Activated B cell treated with CpG ODN at 0.5 μM for 24 hours (primary cell): ENCODE measurements at regions of chr7 and their contacts with region 1.

Region 1: DNA sequence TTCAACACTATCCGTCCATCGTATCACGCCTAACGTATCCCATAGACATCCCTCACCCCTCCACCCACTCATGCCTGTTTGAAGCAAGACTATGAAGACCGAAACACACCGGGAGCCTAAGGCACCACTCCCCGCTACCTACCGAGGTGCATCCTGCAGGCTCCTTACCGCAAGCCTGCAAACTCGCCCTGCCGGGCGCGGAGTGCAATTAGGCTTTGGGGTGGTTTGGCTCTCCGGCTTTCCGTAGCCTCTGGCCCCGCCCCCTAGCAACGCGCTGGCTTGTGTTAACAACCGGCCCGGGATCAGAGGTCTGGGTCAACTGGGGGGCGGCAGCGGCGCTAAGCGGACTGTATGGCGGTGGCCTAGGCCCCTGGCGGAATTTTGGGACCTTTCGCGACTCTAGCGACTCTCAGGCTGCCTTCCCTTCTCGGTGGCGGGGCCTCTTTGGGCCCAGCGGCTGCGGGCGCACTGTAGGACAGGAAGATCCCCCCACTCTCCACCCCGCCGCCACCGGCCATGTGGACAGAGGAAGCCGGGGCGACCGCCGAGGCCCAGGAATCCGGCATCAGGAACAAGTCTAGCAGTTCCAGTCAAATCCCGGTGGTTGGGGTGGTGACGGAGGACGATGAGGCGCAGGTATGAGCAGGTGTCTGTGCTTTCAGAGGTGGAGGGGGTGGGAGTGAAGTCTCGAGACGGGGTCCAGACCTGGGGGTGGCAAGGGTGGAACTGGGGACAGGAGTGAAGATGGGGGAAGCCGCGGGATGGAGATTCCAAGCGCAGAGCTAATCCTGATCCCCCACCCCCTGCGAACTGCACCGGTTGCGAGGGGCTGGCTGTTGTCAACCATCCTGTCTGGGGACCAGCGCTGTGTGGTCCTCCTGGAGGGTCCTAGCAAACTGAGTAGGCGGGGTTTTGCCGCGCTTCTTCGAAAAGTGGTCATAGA is at the start of gene CFAP69:
- DNase-seq: peak; percentile 82
- ATAC-seq: peak; percentile 89
- H3K4me3 Mint-ChIP-seq: peak within 1 kb of the TSS; percentile 87
- H3K27ac Mint-ChIP-seq: peak within 1 kb of the TSS; percentile 3
- H3K4me1 Mint-ChIP-seq: peaks cover 29% of the 10 kb centered on the region
- H3K27me3 Mint-ChIP-seq: peaks cover 37% of the 10 kb centered on the region
- CTCF ChIP-seq: no peak
- total RNA-seq, gene CFAP69: 0.62 TPM in 1 of 2 replicates, not detected in the other

Region 2: DNA sequence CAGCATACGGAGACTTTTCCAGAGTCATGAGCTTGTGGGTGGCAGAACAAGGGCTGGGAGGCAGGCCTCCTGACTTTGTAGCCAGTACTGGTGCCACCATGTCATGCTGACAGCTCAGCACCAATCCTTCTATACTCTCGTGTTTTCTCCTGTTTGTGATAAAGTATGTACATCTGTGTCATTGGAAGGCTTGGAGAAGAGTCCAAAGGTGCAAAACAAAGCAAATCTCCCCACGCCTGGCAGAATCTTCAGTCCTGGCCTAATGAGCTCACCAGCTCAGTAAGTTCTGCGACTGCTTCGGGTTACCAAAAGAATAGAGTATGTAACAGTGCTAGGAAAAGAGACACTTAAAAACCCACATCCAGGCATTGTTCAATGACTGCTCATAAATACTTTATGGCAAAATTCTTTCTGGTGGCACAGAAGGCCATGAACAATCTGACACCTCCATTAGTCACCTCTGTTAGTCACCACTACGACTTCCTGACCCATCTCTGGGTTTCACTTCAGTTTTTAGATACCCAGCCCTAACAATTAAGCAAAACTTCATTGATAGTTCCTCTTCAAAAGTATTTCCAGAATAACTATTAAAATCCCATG is 66.4 kb before region 1 on chr7:
- CTCF ChIA-PET with region 1: no interaction called
- POLR2A ChIA-PET with region 1: no interaction called
- intact Hi-C with region 1: loop called (anchors 2 kb)
- DNase-seq: no peak
- ATAC-seq: peak; percentile 89
- H3K4me3 Mint-ChIP-seq: peak overlapping the region; percentile 56
- H3K27ac Mint-ChIP-seq: peak overlapping the region; percentile 81
- H3K4me1 Mint-ChIP-seq: peaks cover 23% of the 10 kb centered on the region
- H3K27me3 Mint-ChIP-seq: no peaks in the 10 kb centered on the region
- CTCF ChIP-seq: no peak

Region 3: DNA sequence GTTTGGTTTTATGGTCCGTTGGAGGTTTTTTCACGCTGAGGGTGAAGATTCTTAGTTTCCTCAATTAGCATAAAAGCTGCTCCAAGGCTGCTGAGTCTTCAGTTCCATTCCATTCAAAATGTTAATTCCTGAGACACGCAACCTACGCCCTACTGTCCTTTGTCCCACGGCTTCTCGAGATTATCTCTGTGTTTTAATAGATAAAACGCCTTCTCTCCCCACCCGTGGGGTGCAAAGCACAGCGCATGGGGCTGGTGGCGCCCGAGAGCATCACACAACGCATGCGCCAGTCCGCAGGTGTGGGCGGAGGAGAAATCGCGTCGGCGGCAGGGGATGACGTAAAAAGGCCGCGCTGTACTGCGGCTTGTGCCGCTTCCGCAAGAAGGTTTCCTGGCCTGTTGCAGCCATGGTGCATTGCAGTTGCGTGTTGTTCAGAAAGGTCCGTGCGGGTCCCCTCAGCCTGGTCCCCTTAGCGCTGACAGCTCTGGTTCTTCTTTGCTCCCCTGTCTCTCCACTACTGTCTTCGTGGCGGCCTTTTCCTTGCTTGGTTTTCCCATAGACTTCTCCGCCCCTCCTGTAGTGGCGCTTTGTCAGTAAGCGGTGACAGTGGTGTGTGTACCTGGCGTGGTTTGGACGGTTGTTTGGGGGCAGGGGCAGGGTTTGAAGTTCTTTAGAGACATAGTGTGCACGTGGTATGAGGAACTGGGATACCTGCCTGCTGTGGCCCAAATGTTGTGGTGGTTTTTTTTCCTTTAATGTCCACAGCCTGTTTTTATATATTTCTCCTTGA is 101.4 kb after region 1 on chr7 and contains the start of gene GTPBP10:
- CTCF ChIA-PET with region 1: no interaction called
- POLR2A ChIA-PET with region 1: no interaction called
- intact Hi-C with region 1: loop called (anchors 1 kb)
- DNase-seq: peak; percentile 90
- ATAC-seq: peak; percentile 97
- H3K4me3 Mint-ChIP-seq: peak within 1 kb of the TSS; percentile 96
- H3K27ac Mint-ChIP-seq: peak within 1 kb of the TSS; percentile 98
- H3K4me1 Mint-ChIP-seq: peaks cover 35% of the 10 kb centered on the region
- H3K27me3 Mint-ChIP-seq: no peaks in the 10 kb centered on the region
- CTCF ChIP-seq: peak; percentile 37
- total RNA-seq, gene GTPBP10: 28.8 and 29.5 TPM in 2 replicates

Region 4: DNA sequence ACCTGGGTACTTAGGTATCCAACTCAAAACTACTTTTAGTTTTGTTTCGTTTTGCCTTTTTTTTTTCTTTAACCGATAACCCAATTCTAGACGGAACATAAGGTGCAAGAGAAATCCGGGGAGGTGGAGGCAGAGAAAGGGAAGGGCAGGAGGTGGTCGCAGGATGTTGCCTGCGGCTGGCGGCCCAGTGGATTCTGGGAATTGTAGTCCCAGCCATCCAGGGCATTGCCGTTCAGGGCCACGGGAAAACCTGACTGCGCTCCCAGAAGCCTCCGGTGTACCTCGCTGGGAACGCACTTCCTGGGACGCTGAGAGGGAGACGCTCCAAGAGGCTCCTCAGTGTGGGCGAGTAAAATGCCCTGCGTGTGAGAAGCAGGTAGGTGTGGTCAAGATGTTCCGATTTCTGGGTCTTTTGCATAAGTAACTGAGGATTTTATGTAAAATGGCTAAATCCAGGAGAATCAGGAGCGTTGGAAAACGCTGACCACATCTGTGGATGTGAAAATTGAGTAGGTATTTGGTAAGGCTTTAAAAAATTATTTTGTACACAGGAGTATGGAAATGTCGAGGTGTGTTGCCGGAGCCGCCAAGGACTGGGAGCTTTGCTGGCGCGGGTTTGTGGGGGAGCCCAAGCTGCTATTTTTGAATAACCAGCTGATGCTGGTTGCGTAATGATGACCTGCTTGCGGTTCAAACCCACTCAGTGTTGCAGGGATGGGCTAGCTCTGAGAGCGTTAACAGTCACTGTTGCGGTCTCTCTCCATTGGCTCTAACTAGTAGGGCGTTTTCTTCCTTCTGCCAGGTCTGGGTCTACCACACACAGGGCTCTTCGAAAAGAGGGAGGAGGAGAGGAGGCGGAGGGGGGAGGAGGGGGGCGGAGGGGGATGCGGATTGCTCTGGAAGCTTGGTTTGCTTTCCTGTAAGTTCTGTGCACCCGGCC is 158.3 kb after region 1 on chr7 and contains the start of gene CLDN12:
- CTCF ChIA-PET with region 1: no interaction called
- POLR2A ChIA-PET with region 1: no interaction called
- intact Hi-C with region 1: loop called (anchors 1 kb)
- DNase-seq: peak; percentile 57
- ATAC-seq: peak; percentile 94
- H3K4me3 Mint-ChIP-seq: peak within 1 kb of the TSS; percentile 97
- H3K27ac Mint-ChIP-seq: peak within 1 kb of the TSS; percentile 89
- H3K4me1 Mint-ChIP-seq: peaks cover 15% of the 10 kb centered on the region
- H3K27me3 Mint-ChIP-seq: no peaks in the 10 kb centered on the region
- CTCF ChIP-seq: no peak
- total RNA-seq, gene CLDN12: 6.2 and 9.0 TPM in 2 replicates

Region 5: DNA sequence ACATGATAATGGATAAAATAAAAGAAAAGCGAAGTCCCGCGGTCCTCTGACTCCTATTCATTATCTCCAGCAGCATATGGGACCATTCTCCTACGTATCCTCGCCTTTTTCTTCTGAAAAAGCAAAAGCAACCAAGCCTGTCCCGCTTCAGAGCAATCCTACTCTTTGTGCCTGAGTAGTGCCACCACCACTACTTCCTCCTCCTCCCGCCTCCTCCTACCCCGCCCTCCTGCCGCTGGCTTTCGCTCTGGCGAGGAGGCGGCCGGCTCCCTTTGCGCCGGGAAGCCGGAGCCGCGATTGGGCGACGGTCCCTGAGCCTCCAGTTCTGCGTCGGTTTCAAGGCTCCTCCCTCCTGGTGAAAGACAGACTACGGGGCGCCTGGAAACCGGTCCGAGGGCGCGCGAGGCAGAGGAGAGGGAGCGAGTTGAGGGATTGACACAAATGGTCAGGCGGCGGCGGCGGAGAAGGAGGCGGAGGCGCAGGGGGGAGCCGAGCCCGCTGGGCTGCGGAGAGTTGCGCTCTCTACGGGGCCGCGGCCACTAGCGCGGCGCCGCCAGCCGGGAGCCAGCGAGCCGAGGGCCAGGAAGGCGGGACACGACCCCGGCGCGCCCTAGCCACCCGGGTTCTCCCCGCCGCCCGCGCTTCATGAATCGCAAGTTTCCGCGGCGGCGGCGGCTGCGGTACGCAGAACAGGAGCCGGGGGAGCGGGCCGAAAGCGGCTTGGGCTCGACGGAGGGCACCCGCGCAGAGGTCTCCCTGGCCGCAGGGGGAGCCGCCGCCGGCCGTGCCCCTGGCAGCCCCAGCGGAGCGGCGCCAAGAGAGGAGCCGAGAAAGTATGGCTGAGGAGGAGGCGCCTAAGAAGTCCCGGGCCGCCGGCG is 1019.1 kb after region 1 on chr7 and contains the start of gene FZD1:
- CTCF ChIA-PET with region 1: no interaction called
- POLR2A ChIA-PET with region 1: no interaction called
- intact Hi-C with region 1: loop called (anchors 10 kb)
- DNase-seq: peak; percentile 54
- ATAC-seq: peak; percentile 86
- H3K4me3 Mint-ChIP-seq: peak within 1 kb of the TSS; percentile 90
- H3K27ac Mint-ChIP-seq: peak within 1 kb of the TSS; percentile 65
- H3K4me1 Mint-ChIP-seq: peaks cover 21% of the 10 kb centered on the region
- H3K27me3 Mint-ChIP-seq: peaks cover 36% of the 10 kb centered on the region
- CTCF ChIP-seq: no peak
- total RNA-seq, gene FZD1: 0.42 and 0.55 TPM in 2 replicates

Region 6: DNA sequence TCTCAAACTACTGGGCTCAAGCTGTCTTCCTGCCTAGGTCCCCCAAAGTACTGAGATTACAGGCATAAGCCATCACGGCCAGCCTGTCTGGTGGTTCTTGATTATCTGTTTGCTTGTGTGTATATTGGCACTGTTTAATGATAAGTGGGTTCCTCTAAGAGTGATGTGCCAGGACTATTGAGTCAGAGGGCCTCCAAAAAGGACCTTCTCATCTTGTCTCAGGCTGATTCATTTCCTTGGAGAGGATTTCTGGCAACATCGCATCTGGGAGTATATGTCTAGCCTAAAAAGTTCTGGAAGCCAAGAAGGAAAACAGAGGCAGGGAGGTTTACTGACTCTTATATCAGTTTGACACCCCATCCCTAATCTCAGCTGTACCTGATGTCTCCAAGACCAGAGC is 1668.4 kb after region 1 on chr7:
- CTCF ChIA-PET with region 1: no interaction called
- POLR2A ChIA-PET with region 1: no interaction called
- intact Hi-C with region 1: no loop called
- DNase-seq: no peak
- ATAC-seq: no peak
- H3K4me3 Mint-ChIP-seq: no peak overlapping the region
- H3K27ac Mint-ChIP-seq: no peak overlapping the region
- H3K4me1 Mint-ChIP-seq: no peaks in the 10 kb centered on the region
- H3K27me3 Mint-ChIP-seq: peaks cover 11% of the 10 kb centered on the region
- CTCF ChIP-seq: no peak